Activated B cell treated with CpG ODN at 0.5 μM for 24 hours (primary cell): ENCODE measurements at regions of chr15 and their contacts with region 1.

Region 1: GRCh38 chr15:25416693-25417092 is 22.1 kb downstream of the UBE3A start:
- DNase-seq: no peak
- ATAC-seq: no peak
- H3K4me3 Mint-ChIP-seq: no peak overlapping the region
- H3K27ac Mint-ChIP-seq: no peak overlapping the region
- H3K4me1 Mint-ChIP-seq: peaks cover 77% of the 10 kb centered on the region
- H3K27me3 Mint-ChIP-seq: no peaks in the 10 kb centered on the region
- CTCF ChIP-seq: no peak

Region 2: DNA sequence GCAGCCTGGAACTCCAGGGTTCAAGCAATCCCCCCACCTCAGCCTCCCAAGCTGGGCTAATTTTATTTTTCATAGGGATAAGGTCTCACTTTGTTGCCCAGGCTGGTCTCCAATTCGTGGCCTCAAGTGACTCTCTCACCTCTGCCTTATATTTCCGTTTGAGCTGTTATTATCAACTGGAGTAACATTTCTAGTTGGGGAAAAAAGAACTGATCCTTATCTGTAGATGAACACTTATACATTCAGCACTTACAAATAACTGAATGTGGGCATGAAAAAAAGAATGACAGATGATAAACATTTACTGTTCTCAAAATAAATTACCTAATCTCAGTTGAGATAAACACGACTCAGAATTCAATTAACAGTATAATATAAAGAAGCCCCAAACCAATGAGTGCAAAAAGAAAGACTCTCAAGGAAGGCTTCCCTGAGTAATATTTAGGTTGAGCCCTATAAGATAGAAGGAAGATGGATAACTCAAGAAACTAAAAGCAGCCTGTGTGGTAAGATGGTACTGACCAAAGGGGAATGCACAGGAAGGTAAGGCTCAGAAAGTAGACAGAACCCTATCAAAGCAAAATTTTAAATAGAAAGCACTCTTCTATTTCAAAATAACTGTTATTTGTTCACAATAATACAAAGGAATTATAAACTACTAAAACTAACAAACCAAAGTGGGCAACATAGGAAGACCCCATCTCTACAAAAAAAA is 10.4 kb after region 1 on chr15:
- CTCF ChIA-PET with region 1: no interaction called
- POLR2A ChIA-PET with region 1: interaction called, 3 read pairs
- intact Hi-C with region 1: loop called (anchors 2 kb)
- DNase-seq: no peak
- ATAC-seq: no peak
- H3K4me3 Mint-ChIP-seq: no peak overlapping the region
- H3K27ac Mint-ChIP-seq: no peak overlapping the region
- H3K4me1 Mint-ChIP-seq: peaks cover 60% of the 10 kb centered on the region
- H3K27me3 Mint-ChIP-seq: no peaks in the 10 kb centered on the region
- CTCF ChIP-seq: no peak

Region 3: GRCh38 chr15:25446076-25446475 is 29.4 kb after region 1 on chr15:
- CTCF ChIA-PET with region 1: no interaction called
- POLR2A ChIA-PET with region 1: no interaction called
- intact Hi-C with region 1: no loop called
- DNase-seq: no peak
- ATAC-seq: no peak
- H3K4me3 Mint-ChIP-seq: no peak overlapping the region
- H3K27ac Mint-ChIP-seq: no peak overlapping the region
- H3K4me1 Mint-ChIP-seq: no peaks in the 10 kb centered on the region
- H3K27me3 Mint-ChIP-seq: no peaks in the 10 kb centered on the region
- CTCF ChIP-seq: no peak